IMR-90 (cell line): ENCODE measurements at regions of chr18 and their contacts with region 1.

Region 1: GRCh38 chr18:28013066-28013465 is 163.9 kb downstream of the CDH2 start:
- DNase-seq: peak; percentile 23
- ATAC-seq: no peak
- H3K4me3 ChIP-seq: no peak overlapping the region
- H3K27ac ChIP-seq: no peak overlapping the region
- H3K4me1 ChIP-seq: peaks cover 4% of the 10 kb centered on the region; the same call in 1 of the 2 replicates
- H3K27me3 ChIP-seq: no peaks in the 10 kb centered on the region
- CTCF ChIP-seq: peak; percentile 57
- POLR2A ChIP-seq: no peak
- RAD21 ChIP-seq: peak; percentile 60

Region 2: DNA sequence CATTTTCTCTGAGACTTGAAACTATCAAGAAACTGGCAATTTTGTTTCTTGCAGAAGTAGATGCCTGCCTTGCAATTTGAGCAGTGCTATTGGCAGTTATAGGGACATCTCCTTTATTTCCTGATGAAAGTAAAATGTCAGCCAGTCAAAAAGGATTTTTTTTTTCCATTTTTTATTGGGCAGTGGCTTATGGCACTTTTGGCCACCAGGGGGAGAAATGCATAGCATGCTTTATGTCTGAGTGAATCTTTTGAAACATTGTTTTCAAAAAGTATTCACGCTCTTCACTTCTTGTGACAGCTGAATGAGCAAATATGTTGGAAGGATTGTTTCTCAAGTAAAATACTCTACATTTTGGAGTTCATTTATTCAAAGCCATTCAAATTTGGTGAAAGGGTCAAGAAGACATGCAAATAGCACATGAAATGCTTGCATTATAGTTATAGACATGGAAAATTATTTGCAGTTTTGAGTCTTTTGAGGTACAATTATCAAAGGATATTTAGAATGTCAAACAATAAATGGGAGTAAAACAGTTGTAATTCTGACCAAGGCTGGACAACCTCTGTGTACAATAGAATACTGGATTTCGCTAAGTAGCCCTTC is 327.2 kb before region 1 on chr18:
- CTCF ChIA-PET with region 1: no interaction called
- POLR2A ChIA-PET with region 1: no interaction called
- dilution Hi-C with region 1: no loop called
- in situ Hi-C with region 1: no loop called
- intact Hi-C with region 1: loop called (anchors 10 kb)
- DNase-seq: peak; percentile 39
- ATAC-seq: no peak; the same call in 1 of the 2 replicates
- H3K4me3 ChIP-seq: no peak overlapping the region
- H3K27ac ChIP-seq: no peak overlapping the region
- H3K4me1 ChIP-seq: no peaks in the 10 kb centered on the region
- H3K27me3 ChIP-seq: no peaks in the 10 kb centered on the region; the same call in 1 of the 2 replicates
- CTCF ChIP-seq: peak; percentile 84
- POLR2A ChIP-seq: no peak
- RAD21 ChIP-seq: peak; percentile 65

Region 3: GRCh38 chr18:28108814-28109213 is 95.7 kb after region 1 on chr18:
- CTCF ChIA-PET with region 1: no interaction called
- POLR2A ChIA-PET with region 1: no interaction called
- dilution Hi-C with region 1: no loop called
- in situ Hi-C with region 1: no loop called
- intact Hi-C with region 1: loop called (anchors 2 kb)
- DNase-seq: no peak
- ATAC-seq: no peak
- H3K4me3 ChIP-seq: no peak overlapping the region
- H3K27ac ChIP-seq: no peak overlapping the region
- H3K4me1 ChIP-seq: peaks cover 17% of the 10 kb centered on the region
- H3K27me3 ChIP-seq: no peaks in the 10 kb centered on the region
- CTCF ChIP-seq: no peak
- POLR2A ChIP-seq: no peak
- RAD21 ChIP-seq: peak; percentile 37

Region 4: GRCh38 chr18:28158083-28158581 is 145.1 kb after region 1 on chr18:
- CTCF ChIA-PET with region 1: no interaction called
- POLR2A ChIA-PET with region 1: no interaction called
- dilution Hi-C with region 1: no loop called
- in situ Hi-C with region 1: no loop called
- intact Hi-C with region 1: loop called (anchors 1 kb)
- DNase-seq: peak; percentile 30
- ATAC-seq: peak; percentile 28; the same call in 1 of the 2 replicates
- H3K4me3 ChIP-seq: no peak overlapping the region; the same call in 1 of the 2 replicates
- H3K27ac ChIP-seq: no peak overlapping the region
- H3K4me1 ChIP-seq: peaks cover 10% of the 10 kb centered on the region
- H3K27me3 ChIP-seq: no peaks in the 10 kb centered on the region
- CTCF ChIP-seq: no peak; the same call in 1 of the 2 replicates
- POLR2A ChIP-seq: no peak
- RAD21 ChIP-seq: 0 out of 2 replicates have a peak, but pooled peaks have one; percentile 29

Region 5: GRCh38 chr18:28176933-28177827 is 164.1 kb after region 1 on chr18 and contains the start of gene CDH2:
- CTCF ChIA-PET with region 1: no interaction called
- POLR2A ChIA-PET with region 1: no interaction called
- dilution Hi-C with region 1: no loop called
- in situ Hi-C with region 1: loop called (anchors 10 kb)
- intact Hi-C with region 1: loop called (anchors 2 kb)
- DNase-seq: peak; percentile 85
- ATAC-seq: peak; percentile 73
- H3K4me3 ChIP-seq: peak within 1 kb of the TSS; percentile 99
- H3K27ac ChIP-seq: peak within 1 kb of the TSS; percentile 18; the same call in 1 of the 2 replicates
- H3K4me1 ChIP-seq: peaks cover 3% of the 10 kb centered on the region; the same call in 1 of the 2 replicates
- H3K27me3 ChIP-seq: no peaks in the 10 kb centered on the region
- CTCF ChIP-seq: peak; percentile 17; the same call in 1 of the 2 replicates
- POLR2A ChIP-seq: peak; percentile 53; the same call in 1 of the 2 replicates
- RAD21 ChIP-seq: no peak
- total RNA-seq, gene CDH2: 105 and 111 TPM in 2 replicates

Region 6: DNA sequence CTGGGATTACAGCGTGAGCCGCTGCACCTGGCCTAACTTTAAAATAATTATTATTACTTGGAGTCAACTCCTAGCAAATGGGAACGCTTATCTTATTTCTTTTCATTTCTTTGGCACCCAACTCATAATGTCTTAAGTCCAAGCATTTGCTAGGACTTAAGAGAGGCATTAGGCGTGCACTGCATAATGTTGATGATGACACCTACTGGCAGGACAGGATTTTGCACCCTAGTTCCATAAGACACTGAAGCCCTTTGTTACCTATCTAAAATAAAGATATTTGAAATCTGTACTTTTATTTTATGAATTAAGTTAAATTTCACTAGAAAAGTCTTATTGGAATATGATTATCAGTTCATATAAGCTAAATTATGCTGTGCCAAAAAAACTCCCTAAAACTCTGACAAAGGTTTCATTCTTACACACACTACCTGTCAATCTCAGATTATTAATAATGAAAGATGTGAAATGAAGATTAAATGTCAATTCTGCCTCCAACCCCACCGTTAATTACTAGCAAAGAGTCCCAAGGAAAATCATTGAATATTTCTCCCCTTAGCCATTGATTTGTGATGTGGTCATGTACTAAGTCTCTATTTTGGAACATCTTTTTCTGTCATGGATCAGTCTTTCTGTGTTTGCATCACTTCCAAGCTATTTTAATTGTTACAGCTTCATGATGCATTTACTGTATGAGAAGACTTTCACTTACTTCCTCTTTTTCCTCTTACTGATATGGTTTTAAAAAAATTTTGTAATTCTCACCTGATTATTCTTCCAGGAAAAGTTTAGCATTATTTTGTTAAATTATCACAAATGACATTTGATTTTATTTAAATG is 176.6 kb after region 1 on chr18:
- CTCF ChIA-PET with region 1: no interaction called
- POLR2A ChIA-PET with region 1: no interaction called
- dilution Hi-C with region 1: no loop called
- in situ Hi-C with region 1: loop called (anchors 10 kb)
- intact Hi-C with region 1: no loop called
- DNase-seq: peak; percentile 87
- ATAC-seq: peak; percentile 94
- H3K4me3 ChIP-seq: no peak overlapping the region
- H3K27ac ChIP-seq: no peak overlapping the region
- H3K4me1 ChIP-seq: no peaks in the 10 kb centered on the region
- H3K27me3 ChIP-seq: no peaks in the 10 kb centered on the region
- CTCF ChIP-seq: peak; percentile 91
- POLR2A ChIP-seq: no peak
- RAD21 ChIP-seq: peak; percentile 92